ENCODE measurements at regions of chr19 and their contacts with region 1.

Region 1: DNA sequence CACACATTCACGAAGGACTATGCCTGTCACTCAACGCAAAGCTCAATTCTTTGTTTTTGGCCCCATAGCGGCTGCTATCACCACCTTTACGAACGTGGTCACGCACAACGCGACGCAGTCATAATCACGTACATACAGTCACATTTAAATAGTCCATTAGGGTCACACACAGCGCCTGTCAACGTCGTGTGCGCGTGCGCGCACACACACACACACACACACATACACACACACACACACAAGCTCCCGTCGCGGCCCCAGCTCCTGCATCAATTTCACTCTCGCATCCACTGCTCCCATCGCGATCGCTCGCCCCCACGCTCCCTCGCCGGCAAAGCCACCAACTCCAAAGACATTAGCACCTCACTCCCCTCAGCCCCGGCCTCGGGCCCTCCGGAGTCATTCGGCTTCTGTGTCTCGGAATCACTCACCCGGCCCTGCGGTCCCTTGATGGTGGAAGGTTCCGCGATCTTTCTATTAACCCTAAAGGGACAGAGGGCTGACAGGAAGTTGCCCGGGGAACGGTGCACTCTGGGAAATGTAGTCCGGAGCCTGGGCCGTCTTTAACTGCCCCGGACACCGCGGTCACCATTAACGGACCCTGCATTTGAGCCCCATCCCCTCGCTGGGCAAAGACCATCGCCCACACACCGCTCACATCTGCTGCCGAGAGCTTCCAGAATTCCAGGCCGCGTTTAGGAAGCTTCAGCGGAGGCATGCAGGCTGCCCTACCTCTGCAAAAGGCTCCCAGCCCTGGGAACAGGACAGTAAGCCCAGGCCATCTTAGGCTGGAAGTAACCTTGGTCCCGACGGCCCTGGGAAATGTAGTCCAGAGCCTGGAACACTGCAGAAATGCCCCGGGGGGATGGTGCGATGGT is at the start of gene ZNF790:
- DNase-seq: peak; percentile 87 to 98 (median 92)

Region 2: DNA sequence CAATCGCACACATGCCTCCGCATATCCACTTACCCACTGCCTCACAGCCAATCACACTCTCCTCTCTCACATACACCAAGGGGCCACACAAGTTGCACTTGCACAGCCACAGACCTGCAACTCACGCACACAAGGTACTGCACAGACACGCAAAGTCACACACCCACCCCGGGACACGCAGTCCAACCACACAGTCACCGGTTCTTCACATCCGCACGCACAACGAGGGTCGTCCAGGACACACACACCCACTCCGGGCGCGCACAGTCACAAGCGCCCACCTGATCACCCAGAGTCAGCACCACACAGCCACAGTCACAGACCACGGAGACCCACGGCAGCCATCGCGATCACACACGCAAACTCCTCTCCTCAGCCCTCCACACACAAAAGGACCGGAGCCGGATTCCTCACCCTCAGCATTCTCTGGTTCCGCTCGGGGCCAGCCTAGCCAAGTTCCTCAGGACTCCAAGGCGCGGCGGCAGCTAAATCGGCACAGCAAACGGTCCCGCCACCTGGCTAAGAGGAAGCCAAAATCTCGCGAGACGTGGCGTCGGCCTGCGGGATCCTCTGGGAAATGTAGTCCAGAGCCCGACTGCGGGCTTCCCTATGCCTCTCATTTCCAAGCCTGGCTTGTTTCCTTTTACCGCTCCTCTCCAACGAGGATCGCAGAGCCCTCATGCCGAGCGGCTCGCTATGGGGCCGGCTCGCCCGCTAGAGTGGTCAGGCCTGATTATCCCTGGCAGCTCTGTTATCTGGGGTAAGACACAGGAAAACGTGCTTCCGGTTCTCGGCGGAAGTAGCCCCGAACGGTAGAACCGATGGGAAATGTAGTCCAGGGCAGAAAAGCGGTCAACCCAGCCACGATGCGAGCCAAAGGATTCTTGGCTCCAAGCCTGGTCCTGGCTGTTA is 65.6 kb before region 1 on chr19 and contains the start of gene ZNF850:
- intact Hi-C with region 1: loop called (anchors 5 kb)
- DNase-seq: peak; percentile 87 to 99 (median 92)

Region 3: DNA sequence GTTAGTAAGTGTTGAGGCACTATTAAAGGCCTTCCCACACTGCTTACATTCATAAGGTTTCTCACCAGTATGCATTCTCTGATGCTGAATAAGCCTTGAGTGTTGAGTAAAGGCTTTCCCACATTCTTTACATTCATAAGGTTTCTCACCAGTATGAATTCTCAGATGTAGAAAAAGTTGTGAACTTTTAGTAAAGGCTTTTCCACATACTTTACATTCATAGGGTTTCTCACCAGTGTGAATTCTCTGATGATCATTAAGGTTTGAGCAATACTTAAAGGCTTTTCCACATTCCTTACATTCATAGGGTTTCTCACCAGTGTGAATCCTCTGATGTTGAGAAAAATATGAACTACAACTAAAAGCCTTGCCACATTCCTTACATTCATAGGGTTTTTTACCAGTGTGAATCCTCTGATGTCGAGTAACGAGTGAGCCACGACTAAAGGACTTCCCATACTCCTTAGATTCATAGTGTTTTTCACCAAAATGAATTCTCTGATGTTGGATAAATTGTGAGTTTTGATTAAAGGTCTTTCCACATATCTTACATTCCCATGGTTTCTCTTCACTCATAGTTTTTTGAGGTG is 53.7 kb after region 1 on chr19:
- intact Hi-C with region 1: no loop called
- DNase-seq: no peak

Region 4: GRCh38 chr19:37077934-37078725 is 240.0 kb after region 1 on chr19 and contains the start of gene ZNF420:
- intact Hi-C with region 1: loop called (anchors 5 kb)
- DNase-seq: peak; percentile 87 to 99 (median 92)

Measured in posterior cingulate gyrus (tissue), 11 donors.